ENCODE measurements at regions of chr3 and their contacts with region 1.

Region 1: DNA sequence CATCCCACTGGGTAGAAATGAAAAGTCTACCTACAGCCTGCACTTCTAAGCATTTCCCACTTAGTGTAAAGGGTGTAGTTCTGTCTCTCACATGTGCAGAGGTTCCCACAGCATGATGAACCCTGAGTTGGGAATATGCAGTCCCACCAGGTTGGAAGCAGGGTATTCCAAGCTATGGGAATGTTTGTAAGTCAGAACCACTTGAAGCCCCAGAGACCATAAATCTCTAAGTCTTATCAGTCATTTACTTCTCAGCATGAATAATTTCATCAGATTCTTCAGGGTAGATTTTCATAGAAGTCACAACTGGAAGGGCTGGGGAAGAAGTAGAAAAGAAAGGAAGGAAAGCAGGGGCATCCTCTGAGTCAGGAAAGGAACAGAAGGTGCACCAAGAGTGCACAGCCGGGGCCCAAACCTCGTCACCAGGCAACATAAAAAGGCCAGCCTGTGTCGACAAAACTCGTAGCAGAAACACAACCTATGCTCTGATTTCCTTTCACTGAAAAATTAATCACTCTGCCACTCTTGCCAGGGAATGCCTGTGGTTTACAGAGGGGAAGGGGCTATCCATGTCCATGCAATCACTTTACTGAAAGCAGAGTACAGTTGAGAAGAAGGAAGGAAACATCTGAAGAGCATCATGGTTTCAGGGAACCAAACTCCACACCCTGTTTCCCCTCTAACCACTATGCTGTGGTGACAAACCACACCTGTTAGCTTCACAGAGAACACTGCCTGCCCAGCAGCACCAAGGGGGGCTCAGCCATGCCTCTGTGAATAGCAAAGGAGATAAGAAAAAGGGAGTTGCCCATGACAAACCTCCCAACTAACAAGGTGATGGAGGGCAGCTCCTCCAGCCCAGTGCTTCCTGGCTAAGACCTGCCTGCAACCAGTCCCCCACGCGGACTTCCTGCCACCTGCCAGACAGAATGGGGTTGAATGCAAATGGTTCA is 40.5 kb downstream of the SH3BP5 start:
- DNase-seq: peak; percentile 67 to 89
- ATAC-seq: peak; percentile 67 to 88 (median 85)
- H3K4me3 ChIP-seq: peak overlapping the region; percentile 2
- H3K4me3 Mint-ChIP-seq: peak overlapping the region; percentile 84
- H3K27ac ChIP-seq: peak overlapping the region; percentile 80
- H3K27ac Mint-ChIP-seq: peak overlapping the region; percentile 87 to 97
- H3K4me1 ChIP-seq: peaks cover 92% of the 10 kb centered on the region
- H3K4me1 Mint-ChIP-seq: peaks cover 88 to 97% of the 10 kb centered on the region in 2 donors
- H3K27me3 ChIP-seq: no peaks in the 10 kb centered on the region
- H3K27me3 Mint-ChIP-seq: no peaks in the 10 kb centered on the region
- CTCF ChIP-seq: no peak

Region 2: GRCh38 chr3:15313461-15313860 is 21.6 kb after region 1 on chr3:
- intact Hi-C with region 1: loop called (anchors 1 kb)
- DNase-seq: peak in 1 of 2 donors; percentile 62
- ATAC-seq: peak; percentile 74 to 88 (median 84)
- H3K4me3 ChIP-seq: no peak overlapping the region
- H3K4me3 Mint-ChIP-seq: no peak overlapping the region
- H3K27ac ChIP-seq: no peak overlapping the region
- H3K27ac Mint-ChIP-seq: peak overlapping the region; percentile 16 to 83
- H3K4me1 ChIP-seq: peaks cover 43% of the 10 kb centered on the region
- H3K4me1 Mint-ChIP-seq: peaks cover 60 to 64% of the 10 kb centered on the region in 2 donors
- H3K27me3 ChIP-seq: no peaks in the 10 kb centered on the region
- H3K27me3 Mint-ChIP-seq: no peaks in the 10 kb centered on the region
- CTCF ChIP-seq: no peak

Region 3: GRCh38 chr3:15332405-15333098 is 40.7 kb after region 1 on chr3 and contains the start of gene SH3BP5:
- intact Hi-C with region 1: loop called (anchors 1 kb)
- DNase-seq: peak; percentile 75 to 87
- ATAC-seq: peak; percentile 90 to 96 (median 94)
- H3K4me3 ChIP-seq: peak within 1 kb of the TSS; percentile 97
- H3K4me3 Mint-ChIP-seq: peak within 1 kb of the TSS; percentile 97
- H3K27ac ChIP-seq: peak within 1 kb of the TSS; percentile 58
- H3K27ac Mint-ChIP-seq: peak within 1 kb of the TSS; percentile 88 to 95
- H3K4me1 ChIP-seq: peaks cover 27% of the 10 kb centered on the region
- H3K4me1 Mint-ChIP-seq: peaks cover 42 to 55% of the 10 kb centered on the region in 2 donors
- H3K27me3 ChIP-seq: no peaks in the 10 kb centered on the region
- H3K27me3 Mint-ChIP-seq: no peaks in the 10 kb centered on the region
- CTCF ChIP-seq: peak; percentile 61
- total RNA-seq, gene SH3BP5: 89.4 to 129 (median 91.0) TPM